Activated CD4-positive, alpha-beta T cell treated with anti-CD3 and anti-CD28 coated beads, Interleukin-2, amount 10 ng/mL, durations not matched to agents 24 days and 14 days (primary cell): ENCODE measurements at regions of chr2 and their contacts with region 1.

Region 1: GRCh38 chr2:153519257-153519875 is 40.8 kb upstream of the RPRM start:
- DNase-seq: peak; percentile 83
- H3K4me3 Mint-ChIP-seq: no peak overlapping the region
- H3K27ac Mint-ChIP-seq: no peak overlapping the region
- H3K4me1 Mint-ChIP-seq: no peaks in the 10 kb centered on the region
- H3K27me3 Mint-ChIP-seq: no peaks in the 10 kb centered on the region

Region 2: DNA sequence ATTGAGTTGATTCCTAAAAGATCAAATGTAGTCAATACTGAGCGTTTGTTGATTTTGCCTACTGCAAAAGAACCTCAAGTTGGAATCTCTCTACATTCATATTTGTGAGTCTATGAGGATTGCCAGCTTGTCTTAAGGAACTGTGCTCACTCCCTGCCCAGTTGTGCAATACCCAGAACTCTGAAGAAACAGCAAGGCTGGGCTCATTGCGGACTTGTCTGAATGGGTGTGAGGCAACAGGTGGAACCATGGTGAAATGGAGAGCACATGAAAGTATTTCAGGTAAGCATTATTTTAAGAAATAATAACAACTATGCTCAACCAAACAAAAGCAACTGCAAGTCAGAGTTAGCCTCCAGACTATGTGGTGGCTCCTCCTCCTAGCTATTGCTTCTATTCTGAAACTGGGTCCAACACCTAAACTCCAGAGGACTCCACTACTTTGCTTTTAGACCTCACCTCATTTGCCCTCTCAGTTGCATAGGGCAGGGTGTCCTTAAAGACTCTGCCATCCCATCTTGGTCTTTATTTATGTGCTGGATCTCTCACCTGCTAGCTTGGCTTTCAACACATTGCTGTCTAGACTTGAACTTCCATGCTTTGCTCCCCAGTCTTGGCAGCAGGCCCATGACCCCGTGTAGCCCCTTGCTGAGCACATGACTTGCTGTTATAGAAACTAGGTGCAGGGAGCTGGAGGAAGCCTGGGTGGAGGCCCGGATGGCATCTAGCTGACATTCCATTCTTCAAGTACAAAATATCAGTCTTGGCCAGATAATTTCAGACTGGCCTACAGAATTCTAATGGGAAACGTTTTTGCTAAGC is 1596.3 kb before region 1 on chr2:
- intact Hi-C with region 1: no loop called
- DNase-seq: no peak
- H3K4me3 Mint-ChIP-seq: no peak overlapping the region
- H3K27ac Mint-ChIP-seq: no peak overlapping the region
- H3K4me1 Mint-ChIP-seq: no peaks in the 10 kb centered on the region
- H3K27me3 Mint-ChIP-seq: peaks cover 14% of the 10 kb centered on the region

Region 3: DNA sequence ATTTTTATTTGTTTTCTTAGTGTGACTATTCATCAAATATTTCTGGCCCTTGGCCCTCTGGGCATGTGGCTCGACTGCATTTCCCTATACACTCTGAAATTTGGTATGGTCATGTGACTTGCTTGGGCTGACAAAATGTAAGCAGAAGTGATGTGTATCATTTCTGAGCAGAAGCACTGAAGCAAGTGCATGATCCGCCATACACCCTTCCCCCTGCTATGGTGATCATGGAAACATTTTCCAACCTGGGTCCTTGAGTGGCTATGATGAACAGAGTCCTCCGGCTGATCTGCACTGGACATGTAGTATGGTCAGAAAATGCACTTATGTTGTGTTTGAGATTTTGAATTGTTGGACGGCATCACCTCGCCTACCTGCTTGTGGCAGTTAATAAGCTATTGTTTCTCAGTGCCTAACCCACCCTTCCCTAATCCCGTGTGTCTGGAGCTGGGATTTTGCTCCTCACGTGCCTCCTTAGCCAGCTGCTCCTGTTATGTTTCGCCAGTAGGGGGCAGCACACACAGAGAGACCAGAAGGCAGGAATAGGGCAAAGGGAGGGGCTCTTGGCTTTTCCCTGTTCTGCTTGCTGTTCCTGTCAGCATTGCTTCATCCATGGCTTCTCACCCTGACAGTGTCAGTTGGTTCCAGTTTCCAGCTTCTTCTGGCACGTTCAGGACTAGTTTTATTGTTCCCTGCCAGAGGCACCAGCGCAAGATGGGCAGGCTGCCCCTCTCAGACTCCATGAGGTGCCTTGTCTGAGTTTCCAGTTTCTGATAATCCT is 593.6 kb before region 1 on chr2:
- intact Hi-C with region 1: loop called (anchors 1 kb)
- DNase-seq: peak; percentile 82
- H3K4me3 Mint-ChIP-seq: no peak overlapping the region
- H3K27ac Mint-ChIP-seq: no peak overlapping the region
- H3K4me1 Mint-ChIP-seq: no peaks in the 10 kb centered on the region
- H3K27me3 Mint-ChIP-seq: no peaks in the 10 kb centered on the region

Region 4: DNA sequence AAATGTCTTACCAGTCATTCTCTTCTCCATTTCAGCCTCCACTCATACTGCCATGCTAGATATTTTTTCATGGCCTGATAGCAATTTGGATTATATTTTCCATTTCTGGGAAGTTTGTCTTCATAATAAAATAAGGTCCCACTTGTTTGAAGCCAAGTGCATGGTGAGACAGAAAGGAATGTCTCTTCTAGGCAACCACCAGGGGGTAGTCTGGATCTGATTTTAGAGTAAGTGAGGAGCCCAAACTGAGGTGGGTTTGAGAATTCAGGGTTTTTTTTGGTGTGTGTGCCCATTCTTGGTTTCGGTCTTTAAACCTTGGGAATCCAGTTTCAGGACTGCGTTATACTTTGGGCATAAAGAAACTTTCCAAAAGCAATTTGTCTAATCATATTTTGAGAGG is 356.3 kb before region 1 on chr2:
- intact Hi-C with region 1: loop called (anchors 2 kb)
- DNase-seq: no peak
- H3K4me3 Mint-ChIP-seq: no peak overlapping the region
- H3K27ac Mint-ChIP-seq: no peak overlapping the region
- H3K4me1 Mint-ChIP-seq: no peaks in the 10 kb centered on the region
- H3K27me3 Mint-ChIP-seq: no peaks in the 10 kb centered on the region